ENCODE measurements at regions of chr16 and their contacts with region 1.

Region 1: DNA sequence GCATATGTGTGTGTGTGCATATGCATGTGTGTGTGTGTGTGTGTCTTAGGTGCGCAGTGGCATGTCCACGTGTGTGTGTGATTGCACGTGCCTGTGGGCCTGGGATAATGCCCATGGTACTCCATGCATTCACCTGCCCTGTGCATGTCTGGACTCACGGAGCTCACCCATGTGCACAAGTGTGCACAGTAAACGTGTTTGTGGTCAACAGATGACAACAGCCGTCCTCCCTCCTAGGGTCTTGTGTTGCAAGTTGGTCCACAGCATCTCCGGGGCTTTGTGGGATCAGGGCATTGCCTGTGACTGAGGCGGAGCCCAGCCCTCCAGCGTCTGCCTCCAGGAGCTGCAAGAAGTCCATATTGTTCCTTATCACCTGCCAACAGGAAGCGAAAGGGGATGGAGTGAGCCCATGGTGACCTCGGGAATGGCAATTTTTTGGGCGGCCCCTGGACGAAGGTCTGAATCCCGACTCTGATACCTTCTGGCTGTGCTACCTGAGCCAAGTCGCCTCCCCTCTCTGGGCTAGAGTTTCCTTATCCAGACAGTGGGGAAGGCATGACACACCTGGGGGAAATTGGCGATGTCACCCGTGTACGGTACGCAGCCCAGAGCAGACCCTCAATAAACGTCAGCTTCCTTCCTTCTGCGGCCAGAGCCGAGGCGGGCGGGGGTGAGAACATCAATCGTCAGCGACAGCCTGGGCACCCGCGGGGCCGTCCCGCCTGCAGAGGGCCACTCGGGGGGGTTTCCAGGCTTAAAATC is 47.6 kb downstream of the IL21R start:
- DNase-seq: no peak

Region 2: GRCh38 chr16:27179500-27180072 is 270.0 kb before region 1 on chr16:
- intact Hi-C with region 1: loop called (anchors 10 kb)
- DNase-seq: peak; percentile 46 to 88 (median 76)

Region 3: DNA sequence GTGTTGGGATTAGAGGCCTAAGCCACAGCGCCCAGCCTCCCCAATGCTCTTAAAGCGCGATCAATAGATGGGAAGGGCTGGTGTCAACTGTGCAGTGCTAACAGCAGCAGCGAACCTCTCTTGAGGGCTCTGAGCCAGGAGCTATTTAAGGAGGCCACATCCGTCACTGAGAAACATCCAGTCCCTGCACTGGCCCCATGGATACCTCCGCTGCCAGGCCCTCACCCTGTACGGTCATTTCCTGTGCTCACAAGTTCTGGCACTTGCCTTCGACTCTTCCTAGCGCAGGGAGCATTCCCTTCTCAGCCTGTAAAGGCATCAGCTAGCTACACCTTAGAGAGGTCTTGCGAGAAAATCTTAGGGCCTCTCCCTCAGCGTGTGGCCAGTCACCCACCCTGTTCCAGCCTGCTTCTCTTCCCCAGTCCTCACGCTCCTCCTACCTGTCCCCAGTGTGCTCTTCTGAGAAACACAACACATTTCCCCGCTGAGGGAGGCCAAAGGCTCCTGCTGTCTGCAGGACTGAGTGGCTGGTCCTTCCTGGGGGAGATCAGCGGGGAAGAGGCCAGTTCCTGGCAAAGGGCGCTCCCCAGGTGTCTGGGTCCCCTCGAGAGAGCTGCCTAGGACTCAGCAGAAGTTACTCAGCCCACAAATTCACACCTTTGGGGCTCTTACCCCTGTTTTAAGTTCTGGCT is 71.5 kb after region 1 on chr16:
- intact Hi-C with region 1: no loop called
- DNase-seq: no peak